Right ventricle myocardium superior (tissue), 1 donor: ENCODE measurements at regions of chr12 and their contacts with region 1.

Region 1: GRCh38 chr12:62793256-62794217 is 141.4 kb downstream of the PPM1H start:
- DNase-seq: peak; percentile 92
- ATAC-seq: peak; percentile 90

Region 2: DNA sequence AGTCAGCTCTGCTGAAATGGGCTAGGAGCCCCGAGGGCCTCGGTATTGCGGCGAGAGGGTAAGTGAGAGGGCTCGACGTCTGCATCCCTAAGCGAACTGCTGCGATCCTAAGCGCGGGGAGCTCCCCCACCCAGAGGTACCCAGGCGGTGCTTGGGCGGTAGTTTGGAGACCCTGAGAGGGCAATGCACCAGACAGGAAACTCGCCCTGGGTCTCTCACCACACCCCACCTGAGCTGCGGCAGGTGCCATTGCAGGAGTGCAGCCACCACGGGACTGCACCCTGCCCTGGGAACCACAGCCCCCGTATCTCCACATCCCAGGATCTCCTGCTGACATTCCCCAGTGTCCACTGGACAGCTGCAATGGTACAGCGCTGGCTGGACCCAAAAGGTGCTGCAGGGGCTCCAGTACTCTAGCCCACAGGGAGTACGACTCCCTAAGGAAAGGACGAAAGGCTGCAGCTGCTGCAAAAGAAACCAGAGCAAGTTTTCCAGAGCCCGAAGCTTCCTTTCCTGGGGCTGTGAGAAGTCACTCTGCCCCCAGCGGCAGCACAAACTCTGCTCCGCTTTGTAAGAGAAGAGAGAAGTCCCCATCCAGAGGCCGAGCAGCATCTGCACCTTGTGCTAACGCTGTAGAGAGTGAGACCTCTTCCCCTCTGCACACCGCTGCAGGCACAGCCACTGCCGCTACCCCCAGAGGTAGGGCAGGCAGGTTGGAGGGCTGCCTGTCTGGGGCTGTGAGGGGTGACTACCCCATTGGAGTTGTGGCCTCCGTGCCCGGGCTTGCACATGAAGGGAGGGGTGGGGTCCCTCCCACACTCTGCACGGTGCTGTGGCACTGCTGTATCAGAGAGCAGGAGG is 358.0 kb before region 1 on chr12:
- intact Hi-C with region 1: loop called (anchors 5 kb)
- DNase-seq: peak; percentile 61
- ATAC-seq: peak; percentile 85

Region 3: DNA sequence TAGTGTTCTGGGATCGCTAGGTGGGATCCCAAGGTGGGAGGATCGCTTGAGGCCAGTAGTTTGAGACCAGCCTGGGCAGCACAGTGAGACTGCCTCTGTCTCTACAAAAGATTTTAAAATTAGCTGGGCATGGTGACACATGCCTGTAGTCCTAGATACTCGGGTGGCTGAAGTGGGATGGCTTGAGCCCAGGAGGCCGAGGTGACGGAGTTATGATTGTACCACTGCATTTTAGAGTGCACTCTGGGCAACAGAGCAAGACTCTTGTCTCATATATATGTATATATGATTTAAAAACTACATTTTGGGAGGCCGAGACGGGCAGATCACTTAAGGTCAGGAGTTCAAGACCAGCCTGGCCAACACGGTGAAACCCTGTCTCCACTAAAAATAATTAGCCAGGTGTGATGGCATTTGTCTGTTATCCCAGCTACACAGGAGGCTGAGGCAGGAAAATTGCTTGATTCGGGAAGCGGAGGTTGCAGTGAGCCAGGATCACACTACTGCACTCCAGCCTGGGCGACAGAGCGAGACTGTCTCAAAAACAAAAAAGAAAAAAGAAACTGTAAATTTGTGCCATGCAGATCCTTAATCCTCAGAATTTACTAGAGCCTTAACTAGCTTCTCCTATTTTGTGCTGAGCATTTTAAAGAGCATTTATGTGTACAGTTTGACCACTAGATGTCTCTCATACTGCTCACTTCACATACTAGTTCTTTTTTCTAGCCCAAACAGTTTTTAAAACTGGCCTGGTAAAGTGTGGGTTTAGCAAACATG is 212.1 kb before region 1 on chr12:
- intact Hi-C with region 1: loop called (anchors 5 kb)
- DNase-seq: peak; percentile 49
- ATAC-seq: peak; percentile 94

Region 4: GRCh38 chr12:62684570-62685295 is 108.8 kb before region 1 on chr12:
- intact Hi-C with region 1: no loop called
- DNase-seq: peak; percentile 87
- ATAC-seq: peak; percentile 86

Region 5: DNA sequence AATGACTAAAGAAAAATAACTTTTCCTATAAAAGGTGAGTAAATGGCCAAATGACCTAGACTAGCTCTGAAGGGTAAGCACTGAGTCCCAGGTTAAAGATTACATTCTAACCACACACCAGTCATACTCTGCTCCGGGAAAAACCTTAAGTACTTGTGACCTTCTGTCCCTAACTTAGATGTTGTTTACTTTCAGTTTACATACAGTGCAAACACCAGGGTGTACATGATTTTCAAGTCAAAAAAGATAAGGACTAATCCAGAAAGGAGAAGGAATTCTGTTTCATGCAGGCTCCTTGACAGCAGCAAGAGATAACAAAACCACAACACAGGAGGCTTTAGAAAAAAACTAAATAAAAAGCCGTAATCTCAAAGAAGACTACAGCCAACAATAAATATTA is 32.8 kb before region 1 on chr12:
- intact Hi-C with region 1: no loop called
- DNase-seq: no peak
- ATAC-seq: peak; percentile 44

Region 6: DNA sequence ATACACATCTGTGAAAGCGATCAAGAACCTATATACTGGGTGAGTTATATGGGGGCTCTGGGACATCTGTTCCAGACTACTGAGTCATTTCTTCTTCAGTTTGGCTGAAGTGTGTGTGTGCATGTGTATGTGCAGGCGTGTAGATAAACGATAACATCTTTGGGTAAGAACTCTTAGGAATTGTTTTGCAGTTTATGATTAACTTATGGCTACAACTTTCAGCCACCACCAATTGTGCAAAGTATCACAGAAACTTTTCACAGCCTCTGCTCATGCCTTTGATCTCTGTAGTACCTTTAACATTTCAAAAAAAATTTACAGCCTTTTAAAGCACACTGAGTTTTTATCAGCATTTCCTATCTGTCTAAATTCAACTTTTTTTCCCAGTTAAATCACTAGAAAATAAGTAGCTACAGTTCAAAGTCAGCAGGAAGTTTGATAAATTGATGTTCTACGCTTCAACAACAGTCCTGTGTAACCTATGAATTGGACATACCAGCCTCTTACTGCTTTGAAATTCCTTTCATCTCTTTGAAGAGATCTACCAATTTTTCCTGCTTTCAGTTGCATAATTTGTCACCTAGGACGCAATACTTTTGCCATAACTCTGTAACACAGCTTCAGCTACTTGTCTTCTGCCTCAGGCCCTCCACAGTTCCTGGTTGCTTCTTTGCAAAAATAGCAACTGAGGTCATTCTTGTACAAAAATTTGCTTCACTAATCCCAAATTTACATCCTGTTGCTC is 98.4 kb after region 1 on chr12:
- intact Hi-C with region 1: no loop called
- DNase-seq: no peak
- ATAC-seq: no peak

Region 7: DNA sequence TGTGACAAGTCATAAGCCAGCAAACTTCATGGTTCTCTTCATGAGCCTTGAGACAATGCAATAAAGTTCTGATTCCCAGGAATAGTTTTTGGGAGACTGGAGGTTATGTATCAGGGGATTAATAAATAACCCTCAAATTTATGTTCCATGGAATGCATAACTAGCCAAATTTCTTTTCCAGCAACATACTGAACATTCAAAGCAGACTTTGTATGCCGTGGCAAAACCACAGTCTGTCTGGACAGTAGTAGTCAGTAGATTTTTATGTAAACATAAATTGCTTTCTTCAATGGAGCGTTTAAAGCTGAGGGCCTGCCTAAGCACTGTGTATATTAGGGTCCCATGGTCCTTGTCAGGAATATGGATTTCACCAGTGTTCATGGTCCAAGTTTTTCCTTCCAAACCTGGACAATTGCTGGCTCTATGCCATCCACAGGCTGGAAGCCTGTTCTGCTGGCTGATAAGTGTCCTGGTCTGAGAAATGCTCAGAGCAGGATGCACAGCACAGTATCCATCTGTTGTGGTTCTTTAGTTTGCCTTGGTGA is 1195.8 kb after region 1 on chr12:
- intact Hi-C with region 1: no loop called
- DNase-seq: no peak
- ATAC-seq: peak; percentile 39